PC-9 (cell line): ENCODE measurements at regions of chr3 and their contacts with region 1.

Region 1: GRCh38 chr3:114551770-114552526 is 258.1 kb downstream of the TIGIT start:
- DNase-seq: peak; percentile 68 to 75
- H3K4me3 ChIP-seq: 0 out of 2 replicates have a peak overlapping the region, but pooled peaks have one; percentile 10
- H3K27ac ChIP-seq: peak overlapping the region; percentile 75
- H3K4me1 ChIP-seq: peaks cover 13% of the 10 kb centered on the region
- H3K27me3 ChIP-seq: no peaks in the 10 kb centered on the region
- CTCF ChIP-seq: no peak

Region 2: DNA sequence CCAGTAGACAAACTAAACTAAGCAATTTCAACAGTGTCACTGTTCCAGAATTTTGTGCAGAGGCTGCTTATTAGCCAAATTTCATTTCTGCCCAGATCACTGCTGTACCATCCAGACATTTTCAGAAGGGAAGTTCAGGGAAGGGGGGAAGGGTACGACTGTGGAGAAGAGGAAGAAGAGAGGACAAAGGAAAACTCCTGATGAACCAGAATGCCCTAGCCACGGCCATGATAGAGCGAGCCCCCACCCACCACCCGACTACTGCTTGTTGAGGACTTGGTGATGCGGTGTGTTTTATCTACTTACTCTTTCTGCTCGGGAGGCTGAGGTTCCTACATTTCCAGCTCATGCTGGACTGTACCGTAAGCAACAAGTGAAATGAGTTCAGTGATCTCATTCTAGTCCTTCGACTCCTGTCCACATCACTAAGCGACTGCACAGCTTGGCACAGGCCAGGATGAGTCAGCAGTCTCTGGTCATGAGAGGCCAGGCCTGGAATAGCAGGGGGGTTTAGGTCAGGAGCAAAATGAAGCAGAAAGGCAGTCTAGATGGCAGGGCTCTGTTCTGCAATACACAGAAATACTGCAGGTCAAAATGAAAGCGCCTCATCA is 72.7 kb after region 1 on chr3:
- CTCF ChIA-PET with region 1: no interaction called
- POLR2A ChIA-PET with region 1: no interaction called
- intact Hi-C with region 1: loop called (anchors 5 kb)
- DNase-seq: peak; percentile 81 to 91
- H3K4me3 ChIP-seq: peak overlapping the region; percentile 75
- H3K27ac ChIP-seq: peak overlapping the region; percentile 90
- H3K4me1 ChIP-seq: peaks cover 35% of the 10 kb centered on the region
- H3K27me3 ChIP-seq: no peaks in the 10 kb centered on the region
- CTCF ChIP-seq: no peak